Activated CD4-positive, alpha-beta memory T cell treated with anti-CD3 and anti-CD28 coated beads, Interleukin-2, amount 10 ng/mL, durations not matched to agents 7 days and 5 days (primary cell): ENCODE measurements at regions of chr2 and their contacts with region 1.

Region 1: DNA sequence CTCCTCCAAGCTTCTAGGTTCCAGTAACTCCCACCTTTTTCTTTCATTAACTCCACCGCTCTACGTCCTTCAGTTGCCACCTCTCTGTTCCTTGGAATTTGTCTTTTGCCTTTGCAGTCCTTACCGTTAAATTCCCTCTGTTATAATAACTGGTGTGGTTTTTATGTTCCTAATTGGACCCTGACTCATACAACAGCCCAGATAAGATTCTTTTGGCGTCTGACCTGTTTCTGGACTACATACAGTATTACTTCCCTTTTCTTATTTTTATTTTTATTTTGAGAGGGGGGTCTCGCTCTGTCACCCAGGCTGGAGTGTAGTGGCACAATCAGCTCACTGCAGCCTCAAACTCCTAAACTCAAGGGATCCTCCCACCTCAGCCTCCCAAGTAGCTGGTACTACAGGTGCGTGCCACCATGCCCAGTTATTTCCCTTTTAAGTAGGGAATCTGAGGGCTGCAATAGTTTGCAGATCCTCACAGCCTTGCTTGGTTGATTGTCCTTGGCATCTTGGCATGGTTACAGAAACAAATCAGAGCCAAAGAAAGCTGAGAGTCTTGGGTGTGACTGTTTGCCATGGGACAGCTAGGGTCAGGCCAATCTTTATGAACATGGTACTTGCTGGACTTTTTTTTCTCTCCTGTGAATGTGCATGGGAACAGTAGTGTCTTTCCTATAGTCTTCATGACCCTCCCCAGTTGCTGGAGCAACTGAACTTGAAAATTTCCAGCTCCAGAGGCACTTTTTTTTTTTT is 22.0 kb downstream of the TCF23 start:
- DNase-seq: no peak
- H3K4me3 Mint-ChIP-seq: no peak overlapping the region
- H3K27ac Mint-ChIP-seq: no peak overlapping the region
- H3K4me1 Mint-ChIP-seq: peaks cover 3% of the 10 kb centered on the region
- H3K27me3 Mint-ChIP-seq: peaks cover 13% of the 10 kb centered on the region

Region 2: DNA sequence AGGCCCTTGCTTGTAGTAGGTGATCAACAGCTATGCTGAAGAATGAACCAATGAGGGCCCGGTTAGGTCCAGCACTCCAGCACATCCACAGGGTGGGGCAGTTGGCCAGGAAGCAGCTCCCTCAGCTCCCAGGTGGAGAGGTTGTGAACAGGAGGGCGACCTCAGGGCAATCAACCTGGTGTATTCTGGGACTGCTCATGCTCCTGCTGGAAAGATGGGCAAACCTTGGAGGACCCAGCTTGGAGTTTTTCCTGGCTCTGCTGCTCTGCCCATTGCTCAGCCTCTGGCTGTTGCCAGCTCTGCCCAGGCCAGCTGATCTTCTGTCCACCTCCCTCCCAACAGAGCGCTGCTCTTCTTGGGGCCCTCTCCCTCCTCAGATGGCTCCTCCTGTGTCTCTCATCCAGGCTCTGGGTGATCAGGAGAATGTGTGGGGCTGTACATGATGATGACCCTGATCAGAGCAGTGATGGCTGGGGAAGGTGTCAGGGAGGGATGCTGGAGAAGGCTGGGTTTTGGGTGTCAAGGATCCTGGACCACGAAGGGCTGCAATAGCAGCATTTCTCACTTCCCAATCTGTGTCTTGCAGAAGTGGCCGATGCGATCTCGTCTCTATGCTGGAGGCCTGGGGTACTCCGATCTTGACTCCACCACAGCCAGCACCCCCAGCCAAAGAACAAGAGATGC is 18.5 kb before region 1 on chr2:
- CTCF ChIA-PET with region 1: interaction called, 14 read pairs
- POLR2A ChIA-PET with region 1: no interaction called
- DNase-seq: no peak
- H3K4me3 Mint-ChIP-seq: no peak overlapping the region
- H3K27ac Mint-ChIP-seq: no peak overlapping the region
- H3K4me1 Mint-ChIP-seq: no peaks in the 10 kb centered on the region
- H3K27me3 Mint-ChIP-seq: no peaks in the 10 kb centered on the region

Region 3: GRCh38 chr2:27191053-27191829 is 20.5 kb after region 1 on chr2:
- CTCF ChIA-PET with region 1: interaction called, 12 read pairs
- POLR2A ChIA-PET with region 1: no interaction called
- DNase-seq: peak; percentile 45
- H3K4me3 Mint-ChIP-seq: no peak overlapping the region
- H3K27ac Mint-ChIP-seq: no peak overlapping the region
- H3K4me1 Mint-ChIP-seq: no peaks in the 10 kb centered on the region
- H3K27me3 Mint-ChIP-seq: peaks cover 12% of the 10 kb centered on the region